ENCODE measurements at regions of chr3 and their contacts with region 1.

Region 1: DNA sequence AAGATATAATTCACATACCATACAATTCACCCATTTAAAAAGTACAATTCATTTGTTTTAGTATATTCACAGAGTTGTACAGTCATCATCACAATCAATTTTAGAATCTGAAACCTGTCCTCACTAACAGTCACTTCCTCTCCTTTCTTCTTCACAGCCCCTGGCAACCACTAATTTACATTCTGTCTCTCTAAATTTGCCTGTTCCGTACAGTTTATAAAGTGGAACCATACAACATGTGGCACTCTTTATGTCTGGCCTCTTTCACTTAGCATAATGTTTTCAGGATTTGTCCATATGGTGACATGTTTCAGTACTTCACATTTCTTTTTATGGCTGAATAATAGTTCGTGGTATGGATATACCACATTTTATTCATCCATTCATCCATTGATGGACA is 22.7 kb downstream of the ERICH6 start:
- DNase-seq: no peak
- ATAC-seq: no peak
- H3K4me3 ChIP-seq: no peak overlapping the region
- H3K27ac ChIP-seq: no peak overlapping the region
- H3K4me1 ChIP-seq: no peaks in the 10 kb centered on the region
- H3K27me3 ChIP-seq: peaks cover 2% of the 10 kb centered on the region; the same call in 1 of the 2 replicates
- CTCF ChIP-seq: no peak

Region 2: GRCh38 chr3:150662410-150663200 is 18.5 kb before region 1 on chr3:
- CTCF ChIA-PET with region 1: no interaction called
- POLR2A ChIA-PET with region 1: interaction called, 10 read pairs
- intact Hi-C with region 1: no loop called
- DNase-seq: no peak
- ATAC-seq: no peak
- H3K4me3 ChIP-seq: no peak overlapping the region
- H3K27ac ChIP-seq: no peak overlapping the region
- H3K4me1 ChIP-seq: no peaks in the 10 kb centered on the region
- H3K27me3 ChIP-seq: no peaks in the 10 kb centered on the region
- CTCF ChIP-seq: no peak

Region 3: GRCh38 chr3:150733373-150733935 is 52.4 kb after region 1 on chr3:
- CTCF ChIA-PET with region 1: no interaction called
- POLR2A ChIA-PET with region 1: no interaction called
- intact Hi-C with region 1: no loop called
- DNase-seq: no peak
- ATAC-seq: no peak
- H3K4me3 ChIP-seq: no peak overlapping the region
- H3K27ac ChIP-seq: no peak overlapping the region
- H3K4me1 ChIP-seq: peaks cover 2% of the 10 kb centered on the region; the same call in 1 of the 2 replicates
- H3K27me3 ChIP-seq: no peaks in the 10 kb centered on the region
- CTCF ChIP-seq: no peak

Region 4: DNA sequence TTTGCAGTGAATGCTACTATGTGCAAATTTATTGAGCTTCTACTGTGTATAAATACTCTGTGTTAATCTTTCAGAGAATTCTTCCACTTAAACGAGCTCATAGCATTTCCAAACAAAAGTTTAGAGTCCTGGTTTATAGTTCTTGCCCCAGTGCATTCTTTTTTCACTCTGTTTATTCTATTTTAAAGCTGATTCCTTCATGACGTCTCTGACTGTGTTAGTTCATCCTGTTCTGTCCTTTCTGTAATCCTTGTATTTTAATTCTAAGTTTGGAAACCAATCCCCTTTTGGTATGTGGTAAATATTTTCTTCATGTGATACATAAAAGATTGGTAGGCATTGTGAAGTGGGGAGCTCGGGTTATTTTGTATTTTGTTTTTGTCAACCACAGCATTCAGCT is 578.6 kb after region 1 on chr3:
- CTCF ChIA-PET with region 1: no interaction called
- POLR2A ChIA-PET with region 1: interaction called, 16 read pairs
- intact Hi-C with region 1: no loop called
- DNase-seq: no peak
- ATAC-seq: no peak
- H3K4me3 ChIP-seq: no peak overlapping the region
- H3K27ac ChIP-seq: no peak overlapping the region
- H3K4me1 ChIP-seq: no peaks in the 10 kb centered on the region
- H3K27me3 ChIP-seq: peaks cover 20% of the 10 kb centered on the region
- CTCF ChIP-seq: no peak